H1 (cell line): ENCODE measurements at regions of chr9 and their contacts with region 1.

Region 1: DNA sequence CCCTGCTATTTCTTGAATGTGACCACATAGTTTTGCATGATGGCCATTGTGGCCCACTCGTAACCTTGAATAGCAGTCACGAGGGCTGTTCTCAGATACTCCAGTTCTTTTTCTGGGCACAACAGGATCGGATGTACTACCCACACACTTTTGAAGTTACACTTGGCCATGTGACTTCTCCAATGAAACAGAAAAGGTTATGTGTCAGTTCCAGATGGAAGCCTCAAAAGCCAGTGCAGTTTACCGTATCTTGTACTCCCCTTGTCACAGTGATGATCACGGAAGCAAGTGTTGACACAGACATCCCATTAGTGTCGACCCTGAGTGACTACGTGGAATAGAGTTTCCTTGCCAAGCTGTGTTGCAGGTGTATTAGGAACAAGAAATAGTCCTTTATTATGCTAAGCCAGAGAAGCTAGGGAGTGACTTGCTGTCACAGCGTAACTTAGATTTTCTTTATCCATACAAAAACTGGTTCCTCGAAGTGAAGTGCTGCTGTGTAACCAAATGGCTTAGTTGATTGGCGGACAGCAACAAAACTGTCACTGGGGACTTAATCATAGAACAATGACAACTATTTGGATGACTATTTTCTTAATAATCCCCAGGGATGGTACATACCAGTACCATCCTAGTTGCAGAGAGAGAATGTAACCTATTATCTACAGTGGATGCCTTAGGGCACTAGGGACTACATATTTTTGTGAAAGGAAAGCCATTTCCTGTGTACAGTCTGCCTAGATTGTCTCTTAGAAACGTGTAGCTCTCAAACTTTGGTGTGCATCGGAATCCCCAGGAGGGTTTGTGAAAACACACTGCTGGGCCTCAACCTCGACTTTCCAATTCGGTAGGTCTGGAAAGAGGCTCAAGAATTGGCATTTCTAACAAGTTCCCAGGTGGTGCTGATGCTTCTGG is 90.1 kb upstream of the DMRT1 start:
- DNase-seq: no peak
- H3K4me3 ChIP-seq: no peak overlapping the region
- H3K27ac ChIP-seq: no peak overlapping the region
- H3K4me1 ChIP-seq: peaks cover 0 to 3% (median 0%) of the 10 kb centered on the region in 4 experiments; a peak in 2 of 7 replicates
- H3K27me3 ChIP-seq: no peaks in the 10 kb centered on the region; a peak in 1 of 7 replicates
- CTCF ChIP-seq: no peak
- EP300 ChIP-seq: no peak
- POLR2A ChIP-seq: no peak
- RAD21 ChIP-seq: no peak

Region 2: GRCh38 chr9:613771-614347 is 137.5 kb before region 1 on chr9:
- CTCF ChIA-PET with region 1: interaction called, 195 read pairs
- POLR2A ChIA-PET with region 1: interaction called, 3 read pairs
- DNase-seq: peak; percentile 64 to 66
- H3K4me3 ChIP-seq: no peak overlapping the region
- H3K27ac ChIP-seq: no peak overlapping the region
- H3K4me1 ChIP-seq: peaks cover 0 to 5% (median 1%) of the 10 kb centered on the region in 4 experiments; a peak in 1 of 7 replicates
- H3K27me3 ChIP-seq: no peaks in the 10 kb centered on the region
- CTCF ChIP-seq: peak; percentile 72 to 98 (median 90)
- EP300 ChIP-seq: no peak
- POLR2A ChIP-seq: no peak
- RAD21 ChIP-seq: peak; percentile 97 to 99

Region 3: DNA sequence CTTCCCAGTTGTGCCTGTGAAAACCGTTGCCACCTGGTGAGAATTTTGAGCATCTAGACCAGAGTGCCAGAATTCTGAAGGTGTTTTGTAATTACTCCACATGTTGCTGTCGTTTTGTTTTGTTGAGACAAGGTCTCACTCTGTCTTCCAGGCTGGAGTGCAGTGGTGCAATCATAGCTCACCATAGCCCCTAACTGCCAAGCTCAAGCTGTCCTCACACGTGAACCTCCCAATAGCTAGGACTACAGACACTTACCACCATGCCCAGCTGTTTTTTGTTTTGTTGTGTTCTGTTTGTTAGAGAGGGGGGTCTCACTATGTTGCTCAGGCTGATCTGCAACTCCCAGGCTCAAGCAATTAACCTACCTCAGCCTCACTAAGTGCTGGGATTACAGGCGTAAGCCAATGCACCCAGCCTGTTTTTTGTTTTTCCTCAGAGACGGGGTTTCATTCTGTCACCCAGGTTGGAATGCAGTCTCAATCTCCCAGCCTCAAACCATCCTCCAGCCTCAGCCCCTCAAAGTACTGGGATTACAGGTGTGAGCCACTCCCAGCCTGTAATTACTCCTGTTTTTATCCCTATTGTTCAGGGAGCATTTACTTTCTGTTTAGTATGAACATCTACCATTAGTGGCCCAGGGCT is 31.0 kb before region 1 on chr9:
- CTCF ChIA-PET with region 1: no interaction called
- POLR2A ChIA-PET with region 1: no interaction called
- DNase-seq: no peak
- H3K4me3 ChIP-seq: no peak overlapping the region
- H3K27ac ChIP-seq: no peak overlapping the region
- H3K4me1 ChIP-seq: peaks cover 0 to 13% (median 8%) of the 10 kb centered on the region in 4 experiments; a peak in 4 of 7 replicates
- H3K27me3 ChIP-seq: no peaks in the 10 kb centered on the region
- CTCF ChIP-seq: no peak
- EP300 ChIP-seq: no peak
- POLR2A ChIP-seq: no peak
- RAD21 ChIP-seq: no peak